ENCODE measurements at regions of chr5 and their contacts with region 1.

Region 1: DNA sequence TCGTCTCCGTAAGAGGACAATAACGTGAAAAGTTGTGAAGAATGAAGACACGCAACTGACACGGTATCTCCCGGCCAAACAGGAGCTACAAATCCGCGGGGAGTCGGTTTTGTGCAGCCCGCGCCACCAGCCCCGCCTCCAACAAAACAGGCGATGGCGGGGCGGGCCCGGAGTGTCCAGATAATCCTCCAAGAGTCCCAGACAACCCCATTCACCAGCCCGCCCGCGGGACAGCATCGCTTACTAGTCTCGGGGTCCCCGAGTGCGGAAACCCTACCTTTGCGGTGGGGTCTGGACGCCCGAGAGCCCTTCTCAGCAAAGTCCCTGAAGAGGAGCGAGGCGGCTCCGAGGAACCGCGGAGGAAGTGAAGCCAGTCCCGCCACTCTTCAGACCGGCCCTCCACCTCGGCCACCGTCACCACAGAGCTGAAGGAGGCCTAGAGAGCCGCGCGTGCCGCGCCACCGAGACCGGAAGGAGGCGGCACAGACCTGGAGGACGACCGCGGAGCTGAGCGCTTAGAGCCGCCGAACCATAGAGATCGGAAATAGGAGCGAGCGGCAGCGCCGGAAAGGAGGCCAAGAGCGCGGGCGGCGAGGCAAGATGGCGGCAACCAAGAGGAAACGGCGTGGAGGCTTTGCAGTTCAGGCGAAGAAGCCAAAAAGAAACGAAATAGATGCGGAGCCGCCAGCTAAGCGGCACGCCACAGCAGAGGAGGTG is at the starts of genes BRIX1 and RAD1:
- DNase-seq: peak; percentile 96
- H3K4me3 Mint-ChIP-seq: no peak within 1 kb of the TSS
- H3K27ac Mint-ChIP-seq: no peak within 1 kb of the TSS
- H3K4me1 Mint-ChIP-seq: peaks cover 41% of the 10 kb centered on the region
- H3K27me3 Mint-ChIP-seq: no peaks in the 10 kb centered on the region
- total RNA-seq, gene BRIX1: 33.0 to 36.0 TPM
- total RNA-seq, gene RAD1: 27.5 to 29.2 TPM

Region 2: DNA sequence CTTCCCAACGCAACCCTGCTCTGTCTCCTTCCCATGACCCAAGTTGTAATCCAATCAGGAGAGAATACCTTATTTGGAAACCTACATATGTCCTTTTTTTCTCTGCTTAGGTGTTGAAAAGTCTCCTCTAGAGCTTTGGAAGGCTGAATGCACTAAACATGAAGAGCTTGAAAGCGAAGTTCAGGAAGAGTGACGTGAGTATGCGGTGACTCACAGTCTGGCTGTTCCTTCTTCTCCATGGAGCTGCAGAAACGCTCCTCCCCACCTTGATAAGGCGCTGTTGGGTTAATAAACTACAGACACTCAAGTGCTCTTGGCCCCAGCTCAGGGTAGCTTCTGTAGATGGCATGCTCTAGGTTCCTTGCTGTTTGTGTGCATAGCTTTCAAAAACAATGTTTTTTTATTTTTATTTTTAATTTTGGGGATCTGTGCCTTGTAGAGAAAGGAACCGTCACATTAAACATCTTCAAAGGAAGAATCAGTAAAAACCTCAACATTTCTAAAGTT is 228.5 kb before region 1 on chr5:
- CTCF ChIA-PET with region 1: no interaction called
- POLR2A ChIA-PET with region 1: no interaction called
- DNase-seq: no peak
- H3K4me3 Mint-ChIP-seq: no peak overlapping the region
- H3K27ac Mint-ChIP-seq: no peak overlapping the region
- H3K4me1 Mint-ChIP-seq: no peaks in the 10 kb centered on the region
- H3K27me3 Mint-ChIP-seq: no peaks in the 10 kb centered on the region

Region 3: GRCh38 chr5:34838785-34839714 is 76.2 kb before region 1 on chr5 and contains the start of gene TTC23L:
- CTCF ChIA-PET with region 1: no interaction called
- POLR2A ChIA-PET with region 1: interaction called, 10 read pairs
- DNase-seq: peak; percentile 89
- H3K4me3 Mint-ChIP-seq: peak within 1 kb of the TSS; percentile 89
- H3K27ac Mint-ChIP-seq: peak within 1 kb of the TSS; percentile 61
- H3K4me1 Mint-ChIP-seq: peaks cover 17% of the 10 kb centered on the region
- H3K27me3 Mint-ChIP-seq: peaks cover 7% of the 10 kb centered on the region
- total RNA-seq, gene TTC23L: not detected

Region 4: GRCh38 chr5:34929150-34929719 is 13.9 kb after region 1 on chr5 and contains the start of gene DNAJC21:
- CTCF ChIA-PET with region 1: interaction called, 39 read pairs
- POLR2A ChIA-PET with region 1: interaction called, 200 read pairs
- DNase-seq: peak; percentile 98
- H3K4me3 Mint-ChIP-seq: peak within 1 kb of the TSS; percentile 98
- H3K27ac Mint-ChIP-seq: peak within 1 kb of the TSS; percentile 91
- H3K4me1 Mint-ChIP-seq: peaks cover 40% of the 10 kb centered on the region
- H3K27me3 Mint-ChIP-seq: no peaks in the 10 kb centered on the region
- total RNA-seq, gene DNAJC21: 53.8 to 56.8 TPM

Measured in activated CD4-positive, alpha-beta memory T cell treated with anti-CD3 and anti-CD28 coated beads, Interleukin-2, amount 10 ng/mL, durations not matched to agents 7 days and 5 days (primary cell).